ENCODE measurements at regions of chr12 and their contacts with region 1.

Region 1: GRCh38 chr12:65740873-65741600 is 83.2 kb upstream of the HMGA2 start:
- H3K4me3 ChIP-seq: peak overlapping the region; percentile 64
- H3K27ac ChIP-seq: peak overlapping the region; percentile 71
- H3K4me1 ChIP-seq: 0 out of 2 replicates have a peak, but pooled peaks cover 5% of the 10 kb centered on the region
- CTCF ChIP-seq: no peak

Region 2: GRCh38 chr12:65728848-65729793 is 11.9 kb before region 1 on chr12:
- CTCF ChIA-PET with region 1: interaction called, 4 read pairs
- POLR2A ChIA-PET with region 1: interaction called, 21 read pairs
- H3K4me3 ChIP-seq: peak overlapping the region; percentile 66
- H3K27ac ChIP-seq: peak overlapping the region; percentile 72; the same call in 1 of the 2 replicates
- H3K4me1 ChIP-seq: peaks cover 3% of the 10 kb centered on the region; the same call in 1 of the 2 replicates
- CTCF ChIP-seq: peak; percentile 76

Region 3: GRCh38 chr12:65823513-65824375 is 82.7 kb after region 1 on chr12:
- CTCF ChIA-PET with region 1: no interaction called
- POLR2A ChIA-PET with region 1: interaction called, 10 read pairs
- H3K4me3 ChIP-seq: peak overlapping the region; percentile 90
- H3K27ac ChIP-seq: peak overlapping the region; percentile 99
- H3K4me1 ChIP-seq: peaks cover 26% of the 10 kb centered on the region
- CTCF ChIP-seq: no peak; the same call in 1 of the 2 replicates